ENCODE measurements at regions of chr2 and their contacts with region 1.

Region 1: DNA sequence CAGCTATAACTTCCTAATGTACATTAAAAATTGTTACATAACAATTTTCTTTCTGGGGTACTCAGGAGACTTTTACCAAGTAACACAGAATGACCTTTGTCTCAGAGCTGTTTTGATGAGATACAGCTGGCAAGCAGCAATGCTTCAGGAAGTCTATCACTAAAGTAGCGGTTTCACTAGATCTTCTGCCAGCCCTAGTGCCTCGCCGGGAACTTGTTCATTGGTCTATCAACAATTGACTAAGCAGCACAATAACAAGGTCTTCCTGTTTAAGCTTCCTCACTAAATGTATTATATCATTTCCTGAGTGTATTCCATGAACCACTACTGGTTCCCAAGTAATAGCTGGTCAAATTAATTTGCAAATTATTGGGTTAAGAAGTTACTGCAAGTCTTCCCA is 69.2 kb downstream of the TRIP12 start:
- DNase-seq: peak; percentile 20
- H3K4me3 Mint-ChIP-seq: no peak overlapping the region
- H3K27ac Mint-ChIP-seq: no peak overlapping the region
- H3K4me1 Mint-ChIP-seq: peaks cover 72% of the 10 kb centered on the region
- H3K27me3 Mint-ChIP-seq: no peaks in the 10 kb centered on the region

Region 2: DNA sequence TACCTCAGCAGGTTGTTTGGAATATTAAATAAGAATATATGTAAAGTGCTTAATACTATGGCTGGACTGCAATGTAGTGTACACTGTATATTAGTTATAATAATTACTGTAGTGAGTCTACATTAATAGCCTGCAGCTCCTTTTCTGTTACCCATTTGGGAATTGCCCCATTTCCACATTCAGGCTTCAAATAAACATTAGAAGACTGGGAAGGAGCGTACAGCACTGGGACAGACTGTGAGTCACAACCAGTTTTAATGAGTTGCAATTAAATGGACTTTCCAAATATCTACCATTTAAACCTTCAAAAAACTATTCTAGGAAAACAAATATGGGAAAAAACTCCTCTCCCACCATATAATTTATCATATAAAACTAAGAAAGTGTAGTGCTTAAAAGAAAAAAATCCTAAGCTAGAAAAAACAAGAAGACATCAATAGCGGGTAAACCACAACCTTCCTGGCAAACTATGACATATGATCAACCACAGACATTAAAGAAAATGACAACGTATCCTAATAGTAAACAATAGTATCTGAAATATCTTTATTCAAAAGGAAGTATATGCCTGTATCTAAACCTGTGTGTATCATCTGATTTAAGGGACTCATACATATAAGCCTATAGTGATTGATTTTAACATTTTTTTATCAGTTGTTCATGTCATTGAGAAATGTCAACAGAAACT is 16.8 kb before region 1 on chr2:
- intact Hi-C with region 1: loop called (anchors 2 kb)
- DNase-seq: no peak
- H3K4me3 Mint-ChIP-seq: peak overlapping the region; percentile 37
- H3K27ac Mint-ChIP-seq: peak overlapping the region; percentile 55
- H3K4me1 Mint-ChIP-seq: peaks cover 65% of the 10 kb centered on the region
- H3K27me3 Mint-ChIP-seq: no peaks in the 10 kb centered on the region

Region 3: GRCh38 chr2:229884775-229885699 is 32.5 kb after region 1 on chr2:
- intact Hi-C with region 1: loop called (anchors 5 kb)
- DNase-seq: no peak
- H3K4me3 Mint-ChIP-seq: no peak overlapping the region
- H3K27ac Mint-ChIP-seq: no peak overlapping the region
- H3K4me1 Mint-ChIP-seq: peaks cover 31% of the 10 kb centered on the region
- H3K27me3 Mint-ChIP-seq: no peaks in the 10 kb centered on the region

Region 4: GRCh38 chr2:229927817-229928321 is 75.3 kb after region 1 on chr2:
- intact Hi-C with region 1: no loop called
- DNase-seq: no peak
- H3K4me3 Mint-ChIP-seq: no peak overlapping the region
- H3K27ac Mint-ChIP-seq: no peak overlapping the region
- H3K4me1 Mint-ChIP-seq: peaks cover 11% of the 10 kb centered on the region
- H3K27me3 Mint-ChIP-seq: no peaks in the 10 kb centered on the region